ENCODE measurements at regions of chr7 and their contacts with region 1.

Region 1: GRCh38 chr7:149460493-149461277 is at the start of gene ZNF777:
- DNase-seq: peak; percentile 85
- H3K4me3 Mint-ChIP-seq: peak within 1 kb of the TSS; percentile 80
- H3K27ac Mint-ChIP-seq: peak within 1 kb of the TSS; percentile 59
- H3K4me1 Mint-ChIP-seq: peaks cover 22% of the 10 kb centered on the region
- H3K27me3 Mint-ChIP-seq: peaks cover 3% of the 10 kb centered on the region
- total RNA-seq, gene ZNF777: 8.7 to 9.7 TPM

Region 2: GRCh38 chr7:149440222-149440621 is 20.5 kb before region 1 on chr7:
- CTCF ChIA-PET with region 1: no interaction called
- intact Hi-C with region 1: no loop called
- DNase-seq: no peak
- H3K4me3 Mint-ChIP-seq: no peak overlapping the region
- H3K27ac Mint-ChIP-seq: no peak overlapping the region
- H3K4me1 Mint-ChIP-seq: peaks cover 11% of the 10 kb centered on the region
- H3K27me3 Mint-ChIP-seq: no peaks in the 10 kb centered on the region

Region 3: GRCh38 chr7:149598721-149599306 is 138.1 kb after region 1 on chr7:
- CTCF ChIA-PET with region 1: no interaction called
- intact Hi-C with region 1: loop called (anchors 1 kb)
- DNase-seq: peak; percentile 69
- H3K4me3 Mint-ChIP-seq: no peak overlapping the region
- H3K27ac Mint-ChIP-seq: peak overlapping the region; percentile 51
- H3K4me1 Mint-ChIP-seq: peaks cover 36% of the 10 kb centered on the region
- H3K27me3 Mint-ChIP-seq: no peaks in the 10 kb centered on the region

Measured in activated naive CD4-positive, alpha-beta T cell treated with anti-CD3 and anti-CD28 coated beads for 36 hours (primary cell).